ENCODE measurements at regions of chr7 and their contacts with region 1.

Region 1: DNA sequence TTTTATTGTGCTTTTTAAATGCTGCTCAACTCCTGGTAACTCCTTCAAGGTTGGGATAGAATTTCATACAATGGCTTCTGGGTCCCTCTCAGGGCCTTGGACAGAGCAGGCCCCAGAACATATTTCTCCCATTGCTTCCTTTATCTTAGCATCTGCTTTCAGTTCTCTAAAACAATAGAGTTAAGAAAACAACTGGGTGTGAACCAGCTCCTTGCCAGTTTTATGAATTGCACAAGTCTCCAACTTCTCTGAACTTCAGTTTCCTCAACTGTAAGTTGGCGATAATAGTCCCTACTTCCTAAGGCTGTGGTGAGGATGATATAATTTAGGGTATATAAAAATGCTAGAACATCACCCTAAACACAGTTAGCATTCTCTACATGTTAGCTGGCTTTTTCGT is 77.0 kb upstream of the INHBA start:
- DNase-seq: no peak
- ATAC-seq: no peak
- H3K4me3 ChIP-seq: no peak overlapping the region
- H3K27ac ChIP-seq: no peak overlapping the region
- H3K4me1 ChIP-seq: peaks cover 3% of the 10 kb centered on the region; the same call in 1 of the 2 replicates
- H3K27me3 ChIP-seq: no peaks in the 10 kb centered on the region
- CTCF ChIP-seq: no peak
- POLR2A ChIP-seq: no peak
- RAD21 ChIP-seq: no peak

Region 2: DNA sequence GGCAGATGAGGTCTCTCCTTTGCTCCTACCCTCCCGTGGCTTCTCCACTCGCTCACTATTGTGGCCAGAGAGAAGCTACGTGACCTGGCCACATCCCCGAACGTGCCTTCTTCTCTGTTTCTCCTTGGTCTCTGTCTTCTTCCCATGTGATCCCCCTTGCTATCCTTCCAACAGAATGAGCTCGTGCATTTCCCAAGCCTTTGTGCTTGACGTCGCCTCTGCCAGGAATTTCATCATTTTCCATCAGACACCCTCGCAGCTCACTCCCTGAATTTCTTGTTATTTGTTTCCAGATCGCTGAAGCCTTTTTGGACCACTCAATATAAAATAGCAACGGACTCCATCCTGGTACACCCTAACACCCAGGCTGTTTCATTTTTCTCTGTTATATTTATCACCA is 63.2 kb before region 1 on chr7:
- CTCF ChIA-PET with region 1: no interaction called
- POLR2A ChIA-PET with region 1: no interaction called
- dilution Hi-C with region 1: no loop called
- in situ Hi-C with region 1: no loop called
- intact Hi-C with region 1: no loop called
- DNase-seq: no peak
- ATAC-seq: no peak
- H3K4me3 ChIP-seq: no peak overlapping the region
- H3K27ac ChIP-seq: no peak overlapping the region
- H3K4me1 ChIP-seq: no peaks in the 10 kb centered on the region
- H3K27me3 ChIP-seq: no peaks in the 10 kb centered on the region
- CTCF ChIP-seq: no peak
- POLR2A ChIP-seq: no peak
- RAD21 ChIP-seq: no peak

Region 3: GRCh38 chr7:42843205-42843800 is 1063.4 kb after region 1 on chr7:
- CTCF ChIA-PET with region 1: no interaction called
- POLR2A ChIA-PET with region 1: no interaction called
- dilution Hi-C with region 1: no loop called
- in situ Hi-C with region 1: loop called (anchors 25 kb)
- intact Hi-C with region 1: no loop called
- DNase-seq: peak; percentile 31
- ATAC-seq: peak; percentile 97
- H3K4me3 ChIP-seq: no peak overlapping the region
- H3K27ac ChIP-seq: no peak overlapping the region
- H3K4me1 ChIP-seq: no peaks in the 10 kb centered on the region
- H3K27me3 ChIP-seq: peaks cover 24% of the 10 kb centered on the region
- CTCF ChIP-seq: peak; percentile 59
- POLR2A ChIP-seq: no peak
- RAD21 ChIP-seq: peak; percentile 67